ENCODE measurements at regions of chr1 and their contacts with region 1.

Region 1: DNA sequence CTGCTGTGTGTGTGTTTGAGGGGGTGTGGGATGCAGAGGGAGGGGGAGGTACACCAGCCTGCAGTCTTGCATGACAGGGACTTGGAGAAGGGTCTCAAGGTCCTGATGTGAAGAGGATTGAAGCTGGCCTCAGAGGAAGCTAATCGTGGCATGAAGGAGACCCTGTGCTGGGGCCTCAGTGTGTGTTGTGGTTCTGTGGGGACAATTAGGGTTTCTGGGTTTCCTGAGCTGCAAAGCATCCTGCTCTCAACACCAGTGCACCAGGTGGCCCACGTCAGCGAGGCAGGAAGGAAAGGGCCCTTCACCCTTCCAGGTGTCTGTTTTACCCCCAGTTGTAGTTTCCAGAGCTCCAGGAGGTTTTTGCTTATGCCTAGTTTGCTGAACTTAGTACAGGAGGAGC is 52.8 kb downstream of the TENT5C start:
- DNase-seq: no peak
- H3K4me3 ChIP-seq: no peak overlapping the region
- H3K27ac ChIP-seq: no peak overlapping the region
- H3K4me1 ChIP-seq: no peaks in the 10 kb centered on the region; a peak in 1 of 7 replicates
- H3K27me3 ChIP-seq: peaks cover 0 to 1% (median 0%) of the 10 kb centered on the region in 4 experiments; a peak in 2 of 7 replicates
- CTCF ChIP-seq: no peak
- EP300 ChIP-seq: no peak
- POLR2A ChIP-seq: no peak
- RAD21 ChIP-seq: no peak

Region 2: GRCh38 chr1:117674521-117675397 is 16.1 kb after region 1 on chr1:
- CTCF ChIA-PET with region 1: interaction called, 10 read pairs
- POLR2A ChIA-PET with region 1: no interaction called
- DNase-seq: no peak
- H3K4me3 ChIP-seq: no peak overlapping the region
- H3K27ac ChIP-seq: no peak overlapping the region
- H3K4me1 ChIP-seq: peaks cover 0 to 2% (median 0%) of the 10 kb centered on the region in 4 experiments; a peak in 3 of 7 replicates
- H3K27me3 ChIP-seq: no peaks in the 10 kb centered on the region
- CTCF ChIP-seq: peak in 1 of 3 experiments; percentile 37; a peak in 2 of 4 replicates
- EP300 ChIP-seq: no peak
- POLR2A ChIP-seq: no peak
- RAD21 ChIP-seq: peak; percentile 32 to 41; a peak in 3 of 4 replicates

Region 3: GRCh38 chr1:117685936-117686806 is 27.5 kb after region 1 on chr1:
- CTCF ChIA-PET with region 1: no interaction called
- POLR2A ChIA-PET with region 1: no interaction called
- DNase-seq: no peak
- H3K4me3 ChIP-seq: no peak overlapping the region
- H3K27ac ChIP-seq: no peak overlapping the region
- H3K4me1 ChIP-seq: no peaks in the 10 kb centered on the region
- H3K27me3 ChIP-seq: no peaks in the 10 kb centered on the region
- CTCF ChIP-seq: peak; percentile 9 to 34 (median 27); a peak in 2 of 4 replicates
- EP300 ChIP-seq: no peak
- POLR2A ChIP-seq: no peak
- RAD21 ChIP-seq: peak; percentile 33 to 37; a peak in 3 of 4 replicates